Activated T-helper 1 cell treated with anti-CD3 and anti-CD28 coated beads, Interleukin-12 subunit alpha, Interleukin-12 subunit beta, Interleukin-2, Interleukin-4 antibody, amounts not matched to agents 30 ng/mL and 10 ng/mL and 1 ng/mL, durations not matched to agents 14 hours and 24 hours and 36 hours (primary cell): ENCODE measurements at regions of chr5 and their contacts with region 1.

Region 1: GRCh38 chr5:156920042-156920860 is 42.8 kb downstream of the TIMD4 start:
- DNase-seq: peak; percentile 80
- H3K4me3 Mint-ChIP-seq: peak overlapping the region; percentile 89
- H3K27ac Mint-ChIP-seq: peak overlapping the region; percentile 99
- H3K4me1 Mint-ChIP-seq: peaks cover 80% of the 10 kb centered on the region
- H3K27me3 Mint-ChIP-seq: no peaks in the 10 kb centered on the region

Region 2: GRCh38 chr5:156800929-156801328 is 119.3 kb before region 1 on chr5:
- intact Hi-C with region 1: no loop called
- DNase-seq: no peak
- H3K4me3 Mint-ChIP-seq: no peak overlapping the region
- H3K27ac Mint-ChIP-seq: no peak overlapping the region
- H3K4me1 Mint-ChIP-seq: peaks cover 21% of the 10 kb centered on the region
- H3K27me3 Mint-ChIP-seq: peaks cover 5% of the 10 kb centered on the region

Region 3: DNA sequence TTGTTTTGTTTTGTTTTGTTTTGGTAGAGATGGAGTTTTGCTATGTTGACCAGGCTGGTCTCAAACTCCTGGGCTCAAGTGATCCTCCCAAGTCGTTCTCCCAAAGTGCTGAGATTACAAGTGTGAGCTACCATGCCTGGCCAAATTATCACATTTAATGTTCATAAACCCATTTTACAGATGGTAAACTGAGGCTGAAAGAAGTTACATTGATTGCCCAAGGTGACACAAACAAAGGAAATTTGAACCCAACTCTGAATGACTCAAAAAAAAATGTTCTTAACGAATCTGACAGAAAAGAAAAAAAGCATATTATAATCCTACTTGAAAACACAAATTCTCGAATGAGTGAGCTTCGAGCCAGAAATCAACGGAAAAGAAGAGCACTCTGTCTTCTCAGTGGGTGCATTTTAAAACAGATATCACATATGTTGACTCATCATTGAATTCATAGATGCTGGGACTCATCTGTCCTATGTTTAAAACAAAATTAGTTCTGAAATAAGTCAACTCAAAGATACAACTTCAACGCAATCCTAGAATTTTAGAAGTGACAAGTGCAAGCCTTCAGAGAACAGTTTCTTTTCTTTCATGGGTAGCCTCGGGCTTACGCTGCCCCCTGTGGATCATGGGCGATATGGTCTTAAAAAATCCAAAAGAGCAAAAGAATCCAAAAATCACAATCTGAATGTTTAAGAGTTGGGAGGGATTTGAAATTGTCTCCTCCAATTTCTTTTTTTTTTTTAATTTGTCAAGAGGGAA is 14.4 kb after region 1 on chr5:
- intact Hi-C with region 1: loop called (anchors 1 kb)
- DNase-seq: peak; percentile 62
- H3K4me3 Mint-ChIP-seq: peak overlapping the region; percentile 49
- H3K27ac Mint-ChIP-seq: peak overlapping the region; percentile 94
- H3K4me1 Mint-ChIP-seq: peaks cover 88% of the 10 kb centered on the region
- H3K27me3 Mint-ChIP-seq: no peaks in the 10 kb centered on the region

Region 4: GRCh38 chr5:157076558-157076957 is 156.3 kb after region 1 on chr5:
- intact Hi-C with region 1: loop called (anchors 1 kb)
- DNase-seq: no peak
- H3K4me3 Mint-ChIP-seq: peak overlapping the region; percentile 15
- H3K27ac Mint-ChIP-seq: peak overlapping the region; percentile 53
- H3K4me1 Mint-ChIP-seq: peaks cover 55% of the 10 kb centered on the region
- H3K27me3 Mint-ChIP-seq: no peaks in the 10 kb centered on the region

Region 5: DNA sequence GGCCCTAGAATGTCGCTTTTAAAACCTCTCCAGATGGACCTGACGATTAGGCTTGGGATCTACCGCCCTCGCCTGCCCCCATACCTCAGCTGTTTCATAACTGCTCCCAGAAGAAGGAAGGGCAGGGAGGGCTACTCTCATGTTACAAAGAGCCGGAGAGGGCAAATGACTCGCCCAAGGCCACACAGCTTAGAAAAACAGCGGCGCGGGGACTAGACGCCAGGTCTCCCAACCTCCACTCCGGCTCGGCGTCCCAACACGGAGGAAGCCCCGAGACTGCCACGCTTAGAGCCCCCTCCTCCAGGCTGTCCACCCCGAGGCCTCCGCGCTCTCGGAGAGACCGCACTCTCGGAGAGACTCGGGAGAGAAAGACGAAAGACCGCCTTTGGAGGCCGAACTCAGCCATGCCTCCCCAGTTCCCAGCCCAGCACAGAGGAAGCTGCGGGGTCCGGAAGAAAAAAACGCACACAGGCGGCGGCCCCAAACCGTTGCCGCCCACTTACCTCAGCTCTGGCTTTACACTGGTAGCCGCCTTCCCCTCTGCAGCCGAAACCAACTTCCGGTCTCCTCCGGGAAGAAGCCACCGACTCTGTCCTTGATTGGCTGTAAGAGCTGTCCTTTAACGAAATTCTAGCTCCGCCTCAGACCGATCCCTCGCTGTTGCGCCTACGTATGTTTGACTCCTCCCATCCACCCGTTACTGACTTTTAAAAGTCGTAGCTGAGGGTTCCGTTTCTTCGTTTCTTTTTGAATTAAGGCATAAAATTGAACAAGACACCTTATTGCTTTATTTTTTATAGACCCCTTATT is 222.3 kb after region 1 on chr5 and contains the start of gene MED7:
- intact Hi-C with region 1: loop called (anchors 1 kb)
- DNase-seq: peak; percentile 95
- H3K4me3 Mint-ChIP-seq: peak within 1 kb of the TSS; percentile 95
- H3K27ac Mint-ChIP-seq: peak within 1 kb of the TSS; percentile 99
- H3K4me1 Mint-ChIP-seq: peaks cover 42% of the 10 kb centered on the region
- H3K27me3 Mint-ChIP-seq: no peaks in the 10 kb centered on the region
- total RNA-seq, gene MED7: 15.0 and 15.5 TPM in 2 replicates

Region 6: GRCh38 chr5:157271740-157272271 is 351.6 kb after region 1 on chr5:
- intact Hi-C with region 1: loop called (anchors 2 kb)
- DNase-seq: peak; percentile 85
- H3K4me3 Mint-ChIP-seq: peak overlapping the region; percentile 74
- H3K27ac Mint-ChIP-seq: peak overlapping the region; percentile 100
- H3K4me1 Mint-ChIP-seq: peaks cover 96% of the 10 kb centered on the region
- H3K27me3 Mint-ChIP-seq: no peaks in the 10 kb centered on the region

Region 7: DNA sequence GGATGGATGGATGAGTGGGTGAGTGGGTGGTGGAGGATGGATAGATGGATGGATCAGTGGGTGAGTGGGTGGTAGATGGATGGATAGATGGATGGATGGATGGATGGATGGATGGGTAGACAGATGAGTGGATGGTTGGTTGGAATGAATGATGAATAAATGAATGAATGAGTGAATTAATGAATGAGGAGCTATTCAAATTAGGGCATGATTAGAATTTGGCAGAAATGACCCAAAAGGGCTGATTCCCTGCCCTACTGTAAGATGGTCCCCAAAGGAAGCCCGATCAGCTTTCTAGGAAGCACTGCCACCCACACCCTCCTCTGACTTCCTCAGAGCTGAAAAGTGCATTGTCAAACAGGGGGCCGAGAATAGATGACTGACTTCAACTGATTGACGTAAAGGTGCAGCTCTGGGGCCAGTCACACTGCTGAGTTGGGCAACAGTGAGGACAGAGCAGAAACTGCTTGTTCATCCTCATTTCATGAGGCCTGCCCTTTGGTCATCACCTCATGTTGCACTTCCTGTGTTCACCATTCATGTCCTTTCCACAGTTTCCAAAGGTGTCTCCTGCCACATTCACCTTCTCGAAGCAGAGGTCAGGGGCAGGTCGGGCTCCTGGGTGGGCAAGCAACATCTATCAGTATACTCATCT is 574.1 kb after region 1 on chr5:
- intact Hi-C with region 1: no loop called
- DNase-seq: no peak
- H3K4me3 Mint-ChIP-seq: no peak overlapping the region
- H3K27ac Mint-ChIP-seq: peak overlapping the region; percentile 80
- H3K4me1 Mint-ChIP-seq: peaks cover 36% of the 10 kb centered on the region
- H3K27me3 Mint-ChIP-seq: no peaks in the 10 kb centered on the region

Region 8: GRCh38 chr5:157858527-157859226 is 938.4 kb after region 1 on chr5 and contains the start of gene CLINT1:
- intact Hi-C with region 1: loop called (anchors 2 kb)
- DNase-seq: peak; percentile 86
- H3K4me3 Mint-ChIP-seq: peak within 1 kb of the TSS; percentile 90
- H3K27ac Mint-ChIP-seq: peak within 1 kb of the TSS; percentile 92
- H3K4me1 Mint-ChIP-seq: peaks cover 71% of the 10 kb centered on the region
- H3K27me3 Mint-ChIP-seq: no peaks in the 10 kb centered on the region
- total RNA-seq, gene CLINT1: 90.5 and 93.1 TPM in 2 replicates